B cell (primary cell): ENCODE measurements at regions of chr6 and their contacts with region 1.

Region 1: GRCh38 chr6:53410508-53411258 is 61.9 kb upstream of the ELOVL5 start:
- DNase-seq: peak; percentile 77
- ATAC-seq: peak; percentile 98
- H3K4me3 ChIP-seq: peak overlapping the region in 2 of 5 experiments; percentile 7 to 39
- H3K4me3 Mint-ChIP-seq: peak overlapping the region; percentile 74
- H3K27ac ChIP-seq: peak overlapping the region; percentile 7 to 46
- H3K27ac Mint-ChIP-seq: peak overlapping the region; percentile 65
- H3K4me1 ChIP-seq: peaks cover 12 to 15% of the 10 kb centered on the region in 2 donors
- H3K4me1 Mint-ChIP-seq: peaks cover 11% of the 10 kb centered on the region
- H3K27me3 ChIP-seq: no peaks in the 10 kb centered on the region
- H3K27me3 Mint-ChIP-seq: no peaks in the 10 kb centered on the region
- CTCF ChIP-seq: peak; percentile 80

Region 2: DNA sequence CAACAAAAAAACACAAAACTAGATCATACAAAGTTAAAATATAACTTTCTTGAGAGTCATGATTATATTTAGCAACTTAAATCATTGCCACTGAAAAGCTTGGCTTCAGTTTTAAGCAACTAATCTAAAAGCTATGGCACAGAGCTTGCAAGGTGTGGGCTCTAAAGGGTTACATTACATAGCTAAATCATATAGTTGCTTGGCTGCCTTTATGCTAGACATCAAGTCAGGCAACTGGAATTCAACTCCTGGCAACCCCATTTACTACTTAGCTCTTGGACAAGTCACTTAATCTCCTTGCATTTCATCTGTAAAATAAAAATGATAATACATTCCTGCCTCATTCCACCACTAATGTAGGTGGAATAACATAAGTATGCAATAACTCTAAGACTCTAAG is 221.1 kb before region 1 on chr6:
- CTCF ChIA-PET with region 1: interaction called, 11 read pairs
- POLR2A ChIA-PET with region 1: no interaction called
- intact Hi-C with region 1: no loop called
- DNase-seq: no peak
- ATAC-seq: no peak
- H3K4me3 ChIP-seq: no peak overlapping the region
- H3K4me3 Mint-ChIP-seq: no peak overlapping the region
- H3K27ac ChIP-seq: no peak overlapping the region
- H3K27ac Mint-ChIP-seq: no peak overlapping the region
- H3K4me1 ChIP-seq: peaks cover 50 to 51% of the 10 kb centered on the region in 2 donors
- H3K4me1 Mint-ChIP-seq: peaks cover 47% of the 10 kb centered on the region
- H3K27me3 ChIP-seq: no peaks in the 10 kb centered on the region
- H3K27me3 Mint-ChIP-seq: no peaks in the 10 kb centered on the region
- CTCF ChIP-seq: no peak

Region 3: GRCh38 chr6:53284901-53285300 is 125.8 kb before region 1 on chr6:
- CTCF ChIA-PET with region 1: interaction called, 18 read pairs
- POLR2A ChIA-PET with region 1: no interaction called
- intact Hi-C with region 1: no loop called
- DNase-seq: no peak
- ATAC-seq: no peak
- H3K4me3 ChIP-seq: no peak overlapping the region
- H3K4me3 Mint-ChIP-seq: peak overlapping the region; percentile 44
- H3K27ac ChIP-seq: peak overlapping the region in 1 of 2 donors; percentile 68
- H3K27ac Mint-ChIP-seq: peak overlapping the region; percentile 67
- H3K4me1 ChIP-seq: peaks cover 77 to 80% of the 10 kb centered on the region in 2 donors
- H3K4me1 Mint-ChIP-seq: peaks cover 86% of the 10 kb centered on the region
- H3K27me3 ChIP-seq: no peaks in the 10 kb centered on the region
- H3K27me3 Mint-ChIP-seq: no peaks in the 10 kb centered on the region
- CTCF ChIP-seq: no peak

Region 4: GRCh38 chr6:53300656-53301551 is 109.8 kb before region 1 on chr6:
- CTCF ChIA-PET with region 1: interaction called, 38 read pairs
- POLR2A ChIA-PET with region 1: no interaction called
- intact Hi-C with region 1: no loop called
- DNase-seq: no peak
- ATAC-seq: peak; percentile 68
- H3K4me3 ChIP-seq: no peak overlapping the region
- H3K4me3 Mint-ChIP-seq: peak overlapping the region; percentile 71
- H3K27ac ChIP-seq: peak overlapping the region; percentile 8 to 82
- H3K27ac Mint-ChIP-seq: peak overlapping the region; percentile 89
- H3K4me1 ChIP-seq: peaks cover 74 to 79% of the 10 kb centered on the region in 2 donors
- H3K4me1 Mint-ChIP-seq: peaks cover 82% of the 10 kb centered on the region
- H3K27me3 ChIP-seq: no peaks in the 10 kb centered on the region
- H3K27me3 Mint-ChIP-seq: no peaks in the 10 kb centered on the region
- CTCF ChIP-seq: no peak

Region 5: DNA sequence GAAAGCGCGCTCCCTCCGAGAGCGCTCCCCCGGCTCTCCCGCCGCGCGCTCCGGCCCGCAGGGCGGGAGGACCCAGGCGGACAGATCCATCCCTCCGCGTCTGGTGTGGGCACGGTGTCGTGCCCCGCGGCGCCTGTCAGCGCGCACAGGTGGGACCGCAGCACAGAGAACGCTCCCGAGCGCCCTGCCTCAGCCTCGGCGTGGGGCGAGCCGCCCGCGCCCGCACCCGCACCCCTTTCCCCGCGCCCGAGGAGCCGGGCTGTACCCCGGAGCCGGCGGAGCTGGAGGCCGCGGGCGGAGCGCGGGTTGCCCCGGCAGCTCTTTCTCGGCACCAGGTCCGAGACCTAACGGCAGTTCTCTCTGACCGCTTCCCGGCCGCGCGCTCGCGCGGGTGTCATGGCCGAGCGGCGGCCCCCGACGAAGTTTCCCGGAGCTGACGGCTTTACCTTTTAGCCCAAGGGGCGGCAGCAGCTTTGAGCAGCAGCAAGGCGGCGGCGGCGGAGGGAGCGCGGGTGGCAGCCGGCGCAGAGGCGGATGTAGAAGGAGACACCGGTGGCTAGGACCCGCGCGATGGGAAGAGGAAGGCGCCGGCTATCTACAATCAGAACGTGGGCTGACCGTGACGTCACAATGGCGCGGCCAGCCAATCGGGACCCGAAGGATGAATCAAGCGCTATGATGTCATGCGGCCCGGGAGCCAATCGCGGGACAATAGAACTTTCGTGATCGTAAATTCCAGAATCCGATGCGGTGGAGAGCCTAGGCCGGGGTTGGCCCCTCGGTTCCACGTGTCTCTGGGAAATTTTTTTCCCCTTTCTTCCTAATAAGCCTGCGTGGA is 62.1 kb before region 1 on chr6 and contains the start of gene ELOVL5:
- CTCF ChIA-PET with region 1: interaction called, 23 read pairs
- POLR2A ChIA-PET with region 1: no interaction called
- intact Hi-C with region 1: loop called (anchors 1 kb)
- DNase-seq: peak; percentile 99
- ATAC-seq: peak; percentile 79
- H3K4me3 ChIP-seq: peak within 1 kb of the TSS; percentile 65 to 97 (median 86)
- H3K4me3 Mint-ChIP-seq: peak within 1 kb of the TSS; percentile 94
- H3K27ac ChIP-seq: peak within 1 kb of the TSS; percentile 84 to 91
- H3K27ac Mint-ChIP-seq: peak within 1 kb of the TSS; percentile 99
- H3K4me1 ChIP-seq: peaks cover 35 to 36% of the 10 kb centered on the region in 2 donors
- H3K4me1 Mint-ChIP-seq: peaks cover 59% of the 10 kb centered on the region
- H3K27me3 ChIP-seq: no peaks in the 10 kb centered on the region
- H3K27me3 Mint-ChIP-seq: no peaks in the 10 kb centered on the region
- CTCF ChIP-seq: no peak
- total RNA-seq, gene ELOVL5: 128 and 134 TPM in 2 replicates

Region 6: DNA sequence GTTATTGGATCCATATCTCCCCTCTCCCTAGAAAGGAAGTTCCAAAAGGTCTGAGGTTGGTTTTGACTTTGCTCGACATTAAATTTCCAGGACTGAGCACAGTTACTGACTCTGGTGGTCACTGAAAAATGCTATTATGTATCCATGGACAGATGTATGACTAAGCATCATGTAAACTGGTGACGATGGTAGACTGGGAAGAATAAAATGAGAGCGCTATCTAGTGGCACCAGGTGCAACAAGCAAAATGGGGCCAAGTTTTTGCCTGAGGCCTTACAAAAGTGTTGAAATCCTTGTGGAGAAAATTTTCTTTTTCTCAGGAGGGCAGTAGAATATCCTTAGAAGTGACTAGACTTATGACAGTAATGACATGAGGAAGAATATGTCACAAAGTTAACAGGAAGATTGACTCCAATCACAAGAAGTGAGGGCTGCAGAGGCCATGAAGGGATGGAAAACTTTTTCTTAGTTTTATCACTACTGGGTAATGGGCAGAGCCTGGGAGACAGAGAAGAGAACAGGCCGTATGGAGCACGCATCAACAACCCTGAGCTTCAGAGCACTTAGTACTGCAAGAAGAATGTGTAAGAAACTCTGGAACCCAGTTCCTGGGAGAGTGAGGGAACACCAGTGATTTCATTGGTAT is 27.0 kb after region 1 on chr6:
- CTCF ChIA-PET with region 1: interaction called, 38 read pairs
- POLR2A ChIA-PET with region 1: no interaction called
- intact Hi-C with region 1: no loop called
- DNase-seq: peak; percentile 51
- ATAC-seq: peak; percentile 73
- H3K4me3 ChIP-seq: no peak overlapping the region
- H3K4me3 Mint-ChIP-seq: no peak overlapping the region
- H3K27ac ChIP-seq: no peak overlapping the region
- H3K27ac Mint-ChIP-seq: peak overlapping the region; percentile 32
- H3K4me1 ChIP-seq: peaks cover 0 to 13% of the 10 kb centered on the region in 2 donors
- H3K4me1 Mint-ChIP-seq: peaks cover 23% of the 10 kb centered on the region
- H3K27me3 ChIP-seq: no peaks in the 10 kb centered on the region
- H3K27me3 Mint-ChIP-seq: no peaks in the 10 kb centered on the region
- CTCF ChIP-seq: peak; percentile 60

Region 7: GRCh38 chr6:53581173-53581773 is 170.6 kb after region 1 on chr6:
- CTCF ChIA-PET with region 1: no interaction called
- POLR2A ChIA-PET with region 1: no interaction called
- intact Hi-C with region 1: no loop called
- DNase-seq: no peak
- ATAC-seq: no peak
- H3K4me3 ChIP-seq: no peak overlapping the region
- H3K4me3 Mint-ChIP-seq: no peak overlapping the region
- H3K27ac ChIP-seq: no peak overlapping the region
- H3K27ac Mint-ChIP-seq: no peak overlapping the region
- H3K4me1 ChIP-seq: no peaks in the 10 kb centered on the region
- H3K4me1 Mint-ChIP-seq: peaks cover 12% of the 10 kb centered on the region
- H3K27me3 ChIP-seq: no peaks in the 10 kb centered on the region
- H3K27me3 Mint-ChIP-seq: no peaks in the 10 kb centered on the region
- CTCF ChIP-seq: no peak

Region 8: DNA sequence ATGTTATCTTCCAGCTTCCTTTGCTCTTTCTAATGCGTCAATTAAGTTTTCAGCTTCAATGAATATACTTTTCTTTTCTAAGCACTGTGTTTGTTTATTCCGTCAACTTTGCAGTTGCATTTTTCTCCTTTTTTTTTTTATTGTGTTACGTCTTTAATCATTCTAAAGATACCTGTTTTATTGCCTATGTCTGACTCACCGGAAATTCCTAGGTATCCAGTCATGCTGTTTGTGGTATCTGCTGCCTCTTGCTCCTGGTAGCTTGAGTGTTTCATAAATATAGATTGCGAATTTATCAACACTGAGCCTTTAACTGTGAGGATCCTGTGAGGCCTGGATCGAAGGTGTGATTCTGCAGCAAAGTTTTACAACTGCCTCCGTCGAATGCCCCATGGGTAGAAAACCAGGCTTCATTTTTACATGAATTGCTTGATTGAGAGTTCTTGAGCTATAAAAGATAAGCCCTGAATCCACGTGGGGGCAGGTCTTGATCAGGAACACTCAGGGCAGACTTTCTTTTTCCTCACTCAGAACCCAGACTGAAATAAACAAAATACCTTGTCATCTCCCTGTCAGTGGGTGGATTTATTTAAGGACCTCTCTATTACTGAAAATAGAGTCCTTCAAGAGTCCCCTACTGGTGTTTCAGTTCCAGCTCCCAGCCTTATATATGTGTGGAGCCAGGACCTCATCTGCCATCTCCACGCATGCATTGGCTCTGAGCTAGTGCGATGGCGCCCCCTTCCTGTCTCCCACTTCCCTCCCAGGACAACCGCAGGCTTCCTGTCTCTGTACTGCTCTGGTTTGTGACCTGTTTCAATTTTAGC is 324.0 kb after region 1 on chr6:
- CTCF ChIA-PET with region 1: no interaction called
- POLR2A ChIA-PET with region 1: no interaction called
- intact Hi-C with region 1: no loop called
- DNase-seq: no peak
- ATAC-seq: no peak
- H3K4me3 ChIP-seq: no peak overlapping the region
- H3K4me3 Mint-ChIP-seq: no peak overlapping the region
- H3K27ac ChIP-seq: no peak overlapping the region
- H3K27ac Mint-ChIP-seq: no peak overlapping the region
- H3K4me1 ChIP-seq: peaks cover 0 to 8% of the 10 kb centered on the region in 2 donors
- H3K4me1 Mint-ChIP-seq: peaks cover 2% of the 10 kb centered on the region
- H3K27me3 ChIP-seq: peaks cover 0 to 2% (median 0%) of the 10 kb centered on the region in 4 experiments
- H3K27me3 Mint-ChIP-seq: peaks cover 11% of the 10 kb centered on the region
- CTCF ChIP-seq: no peak